Endothelial cell of umbilical vein (primary cell): ENCODE measurements at regions of chr1 and their contacts with region 1.

Region 1: GRCh38 chr1:103461161-103462105 is 64.1 kb upstream of the RNPC3 start:
- DNase-seq: peak; percentile 18
- H3K4me3 ChIP-seq: no peak overlapping the region
- H3K27ac ChIP-seq: no peak overlapping the region
- H3K4me1 ChIP-seq: peaks cover 5% of the 10 kb centered on the region
- H3K27me3 ChIP-seq: no peaks in the 10 kb centered on the region
- CTCF ChIP-seq: peak; percentile 29
- POLR2A ChIP-seq: no peak

Region 2: DNA sequence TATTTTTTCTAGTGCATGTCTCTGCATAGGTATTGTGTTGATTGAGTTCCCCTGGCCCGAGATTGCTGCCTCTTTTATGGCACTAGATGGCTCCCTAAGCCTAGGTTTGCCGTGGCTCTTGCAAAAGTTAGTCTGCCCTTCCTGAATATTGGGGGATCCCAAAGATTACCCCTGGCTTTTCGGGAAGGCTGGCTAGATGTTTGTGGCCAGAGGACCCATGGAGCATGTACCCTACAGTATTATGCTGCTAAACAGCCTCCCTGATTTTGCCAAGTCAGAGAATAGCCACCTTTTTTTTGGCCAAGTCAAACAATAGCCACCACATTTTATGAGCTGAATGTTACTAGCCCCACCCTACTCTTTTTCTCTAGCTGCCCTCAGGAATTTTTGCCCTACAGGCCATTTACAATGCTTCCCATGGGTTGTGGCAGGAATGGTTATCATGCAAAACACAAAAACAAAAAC is 1807.9 kb before region 1 on chr1:
- CTCF ChIA-PET with region 1: interaction called, 25 read pairs
- POLR2A ChIA-PET with region 1: no interaction called
- dilution Hi-C with region 1: no loop called
- intact Hi-C with region 1: no loop called
- DNase-seq: peak; percentile 39
- H3K4me3 ChIP-seq: no peak overlapping the region
- H3K27ac ChIP-seq: no peak overlapping the region
- H3K4me1 ChIP-seq: no peaks in the 10 kb centered on the region
- H3K27me3 ChIP-seq: peaks cover 2 to 8% of the 10 kb centered on the region in 2 experiments
- CTCF ChIP-seq: peak; percentile 48 to 54
- POLR2A ChIP-seq: no peak

Region 3: GRCh38 chr1:101769520-101769919 is 1691.9 kb before region 1 on chr1:
- CTCF ChIA-PET with region 1: interaction called, 17 read pairs
- POLR2A ChIA-PET with region 1: no interaction called
- dilution Hi-C with region 1: no loop called
- intact Hi-C with region 1: no loop called
- DNase-seq: peak; percentile 32
- H3K4me3 ChIP-seq: no peak overlapping the region
- H3K27ac ChIP-seq: no peak overlapping the region
- H3K4me1 ChIP-seq: no peaks in the 10 kb centered on the region
- H3K27me3 ChIP-seq: peaks cover 0 to 3% of the 10 kb centered on the region in 2 experiments
- CTCF ChIP-seq: peak; percentile 27 to 40
- POLR2A ChIP-seq: no peak

Region 4: DNA sequence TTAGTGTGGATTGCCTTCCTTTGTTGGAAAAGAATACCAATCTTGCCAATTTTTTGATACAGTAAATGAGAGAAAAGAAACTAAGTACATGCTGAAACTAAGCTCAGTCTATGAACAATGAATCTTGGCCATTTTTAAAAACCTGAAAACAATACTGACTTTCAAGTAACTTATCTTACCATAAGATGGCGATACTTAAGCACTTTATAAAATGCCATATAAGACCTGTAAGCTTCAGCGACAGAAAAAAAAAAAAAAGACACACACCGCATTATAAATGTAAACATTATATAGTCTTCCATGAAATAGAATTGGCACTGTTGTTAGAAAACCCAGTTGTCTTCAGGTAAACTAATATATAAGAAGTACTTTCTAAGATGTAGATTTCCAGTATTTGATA is 1467.7 kb before region 1 on chr1:
- CTCF ChIA-PET with region 1: interaction called, 10 read pairs
- POLR2A ChIA-PET with region 1: no interaction called
- dilution Hi-C with region 1: no loop called
- intact Hi-C with region 1: no loop called
- DNase-seq: no peak
- H3K4me3 ChIP-seq: no peak overlapping the region
- H3K27ac ChIP-seq: no peak overlapping the region
- H3K4me1 ChIP-seq: no peaks in the 10 kb centered on the region
- H3K27me3 ChIP-seq: peaks cover 2 to 8% of the 10 kb centered on the region in 2 experiments
- CTCF ChIP-seq: no peak
- POLR2A ChIP-seq: no peak

Region 5: GRCh38 chr1:103106426-103107341 is 354.7 kb before region 1 on chr1:
- CTCF ChIA-PET with region 1: interaction called, 133 read pairs
- POLR2A ChIA-PET with region 1: no interaction called
- dilution Hi-C with region 1: no loop called
- intact Hi-C with region 1: loop called (anchors 1 kb)
- DNase-seq: peak; percentile 63
- H3K4me3 ChIP-seq: peak overlapping the region; percentile 35 to 68 (median 35)
- H3K27ac ChIP-seq: no peak overlapping the region
- H3K4me1 ChIP-seq: peaks cover 11% of the 10 kb centered on the region
- H3K27me3 ChIP-seq: peaks cover 2 to 9% of the 10 kb centered on the region in 2 experiments
- CTCF ChIP-seq: peak; percentile 36 to 43
- POLR2A ChIP-seq: no peak

Region 6: GRCh38 chr1:103387898-103388297 is 73.5 kb before region 1 on chr1:
- CTCF ChIA-PET with region 1: no interaction called
- POLR2A ChIA-PET with region 1: no interaction called
- dilution Hi-C with region 1: no loop called
- intact Hi-C with region 1: no loop called
- DNase-seq: no peak
- H3K4me3 ChIP-seq: no peak overlapping the region
- H3K27ac ChIP-seq: no peak overlapping the region
- H3K4me1 ChIP-seq: no peaks in the 10 kb centered on the region
- H3K27me3 ChIP-seq: no peaks in the 10 kb centered on the region
- CTCF ChIP-seq: no peak
- POLR2A ChIP-seq: no peak

Region 7: DNA sequence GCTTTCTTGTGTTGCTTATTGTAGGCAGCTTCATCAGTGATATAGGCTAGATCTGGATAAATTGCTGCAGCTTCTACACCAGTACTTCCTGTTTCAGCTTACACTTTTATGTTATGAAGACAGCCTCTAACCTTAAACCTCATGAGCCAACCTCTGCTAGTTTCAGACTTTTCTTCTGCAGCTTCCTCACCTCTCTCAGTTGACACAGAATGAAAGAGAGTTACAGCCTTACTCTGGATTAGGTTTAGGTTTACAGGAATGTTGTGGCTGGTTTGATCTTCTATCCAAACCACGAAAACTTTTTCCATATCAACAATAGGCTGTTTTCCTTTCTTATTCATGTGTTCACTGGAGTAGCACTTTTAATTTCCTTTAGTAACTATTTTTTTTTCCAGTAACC is 12.9 kb before region 1 on chr1:
- CTCF ChIA-PET with region 1: interaction called, 19 read pairs
- POLR2A ChIA-PET with region 1: no interaction called
- dilution Hi-C with region 1: no loop called
- intact Hi-C with region 1: no loop called
- DNase-seq: no peak
- H3K4me3 ChIP-seq: no peak overlapping the region
- H3K27ac ChIP-seq: no peak overlapping the region
- H3K4me1 ChIP-seq: no peaks in the 10 kb centered on the region
- H3K27me3 ChIP-seq: no peaks in the 10 kb centered on the region
- CTCF ChIP-seq: no peak
- POLR2A ChIP-seq: no peak